ENCODE measurements at regions of chr9 and their contacts with region 1.

Region 1: GRCh38 chr9:137590462-137591383 is at the start of gene ZMYND19:
- DNase-seq: peak; percentile 88
- H3K4me3 Mint-ChIP-seq: peak within 1 kb of the TSS; percentile 94
- H3K27ac Mint-ChIP-seq: peak within 1 kb of the TSS; percentile 92
- H3K4me1 Mint-ChIP-seq: peaks cover 25% of the 10 kb centered on the region
- H3K27me3 Mint-ChIP-seq: no peaks in the 10 kb centered on the region
- total RNA-seq, gene ZMYND19: 24.7 to 26.5 TPM

Region 2: GRCh38 chr9:137564817-137565411 is 25.8 kb before region 1 on chr9:
- CTCF ChIA-PET with region 1: no interaction called
- POLR2A ChIA-PET with region 1: no interaction called
- DNase-seq: no peak
- H3K4me3 Mint-ChIP-seq: no peak overlapping the region
- H3K27ac Mint-ChIP-seq: no peak overlapping the region
- H3K4me1 Mint-ChIP-seq: peaks cover 4% of the 10 kb centered on the region
- H3K27me3 Mint-ChIP-seq: no peaks in the 10 kb centered on the region

Region 3: GRCh38 chr9:137578518-137579258 is 12.0 kb before region 1 on chr9 and contains the start of gene DPH7:
- CTCF ChIA-PET with region 1: interaction called, 37 read pairs
- POLR2A ChIA-PET with region 1: interaction called, 3 read pairs
- DNase-seq: peak; percentile 95
- H3K4me3 Mint-ChIP-seq: peak within 1 kb of the TSS; percentile 79
- H3K27ac Mint-ChIP-seq: peak within 1 kb of the TSS; percentile 80
- H3K4me1 Mint-ChIP-seq: peaks cover 34% of the 10 kb centered on the region
- H3K27me3 Mint-ChIP-seq: no peaks in the 10 kb centered on the region
- total RNA-seq, gene DPH7: 31.1 to 34.4 TPM

Measured in activated CD4-positive, alpha-beta T cell treated with anti-CD3 and anti-CD28 coated beads, Interleukin-2, amount 10 ng/mL, durations not matched to agents 7 days and 5 days (primary cell).